HCT116 (cell line): ENCODE measurements at regions of chr17 and their contacts with region 1.

Region 1: GRCh38 chr17:4565209-4566141 is 5.1 kb upstream of the GGT6 start:
- DNase-seq: peak; percentile 84
- ATAC-seq: peak; percentile 84
- H3K4me3 ChIP-seq: no peak overlapping the region
- H3K27ac ChIP-seq: no peak overlapping the region
- H3K4me1 ChIP-seq: peaks cover 3 to 16% of the 10 kb centered on the region in 2 experiments; a peak in 3 of 4 replicates
- H3K27me3 ChIP-seq: no peaks in the 10 kb centered on the region
- CTCF ChIP-seq: peak; percentile 82 to 90 (median 86)
- POLR2A ChIP-seq: no peak
- RAD21 ChIP-seq: peak; percentile 59

Region 2: GRCh38 chr17:4433515-4434031 is 131.9 kb before region 1 on chr17 and contains the start of gene SPNS3:
- CTCF ChIA-PET with region 1: interaction called, 3 read pairs
- POLR2A ChIA-PET with region 1: no interaction called
- RAD21 ChIA-PET with region 1: interaction called in 1 of 2 experiments, 10 read pairs
- intact Hi-C with region 1: no loop called
- DNase-seq: no peak
- ATAC-seq: no peak
- H3K4me3 ChIP-seq: no peak within 1 kb of the TSS
- H3K27ac ChIP-seq: no peak within 1 kb of the TSS
- H3K4me1 ChIP-seq: no peaks in the 10 kb centered on the region
- H3K27me3 ChIP-seq: no peaks in the 10 kb centered on the region
- CTCF ChIP-seq: no peak
- POLR2A ChIP-seq: no peak
- RAD21 ChIP-seq: no peak
- total RNA-seq, gene SPNS3: 0.37 TPM

Region 3: GRCh38 chr17:4554997-4555799 is 10.3 kb before region 1 on chr17 and contains the start of gene MYBBP1A:
- CTCF ChIA-PET with region 1: interaction called, 16 read pairs
- POLR2A ChIA-PET with region 1: interaction called, 3 read pairs
- RAD21 ChIA-PET with region 1: no interaction called
- intact Hi-C with region 1: no loop called
- DNase-seq: peak; percentile 86
- ATAC-seq: peak; percentile 92
- H3K4me3 ChIP-seq: peak within 1 kb of the TSS; percentile 99 to 100
- H3K27ac ChIP-seq: peak within 1 kb of the TSS; percentile 71
- H3K4me1 ChIP-seq: peaks cover 6 to 23% of the 10 kb centered on the region in 2 experiments; a peak in 3 of 4 replicates
- H3K27me3 ChIP-seq: no peaks in the 10 kb centered on the region
- CTCF ChIP-seq: peak in 1 of 3 experiments; percentile 15; a peak in 1 of 6 replicates
- POLR2A ChIP-seq: peak; percentile 91
- RAD21 ChIP-seq: no peak
- total RNA-seq, gene MYBBP1A: 130 TPM

Region 4: GRCh38 chr17:4583782-4584100 is 18.3 kb after region 1 on chr17:
- CTCF ChIA-PET with region 1: interaction called, 19 read pairs
- POLR2A ChIA-PET with region 1: interaction called, 4 read pairs
- RAD21 ChIA-PET with region 1: no interaction called
- intact Hi-C with region 1: no loop called
- DNase-seq: peak; percentile 31
- ATAC-seq: peak; percentile 83
- H3K4me3 ChIP-seq: peak overlapping the region; percentile 51 to 65
- H3K27ac ChIP-seq: peak overlapping the region; percentile 46; the same call in 1 of the 2 replicates
- H3K4me1 ChIP-seq: peaks cover 5 to 23% of the 10 kb centered on the region in 2 experiments; a peak in 3 of 4 replicates
- H3K27me3 ChIP-seq: peaks cover 5% of the 10 kb centered on the region; the same call in 1 of the 2 replicates
- CTCF ChIP-seq: peak in 2 of 3 experiments; percentile 50 to 55; a peak in 4 of 6 replicates
- POLR2A ChIP-seq: no peak
- RAD21 ChIP-seq: no peak

Region 5: GRCh38 chr17:4625181-4625617 is 59.7 kb after region 1 on chr17:
- CTCF ChIA-PET with region 1: interaction called, 59 read pairs
- POLR2A ChIA-PET with region 1: interaction called, 8 read pairs
- RAD21 ChIA-PET with region 1: interaction called, 8 to 9 read pairs
- intact Hi-C with region 1: loop called (anchors 1 kb)
- DNase-seq: no peak
- ATAC-seq: no peak
- H3K4me3 ChIP-seq: no peak overlapping the region
- H3K27ac ChIP-seq: no peak overlapping the region
- H3K4me1 ChIP-seq: peaks cover 0 to 4% of the 10 kb centered on the region in 2 experiments; a peak in 1 of 4 replicates
- H3K27me3 ChIP-seq: no peaks in the 10 kb centered on the region
- CTCF ChIP-seq: no peak
- POLR2A ChIP-seq: no peak
- RAD21 ChIP-seq: no peak

Region 6: DNA sequence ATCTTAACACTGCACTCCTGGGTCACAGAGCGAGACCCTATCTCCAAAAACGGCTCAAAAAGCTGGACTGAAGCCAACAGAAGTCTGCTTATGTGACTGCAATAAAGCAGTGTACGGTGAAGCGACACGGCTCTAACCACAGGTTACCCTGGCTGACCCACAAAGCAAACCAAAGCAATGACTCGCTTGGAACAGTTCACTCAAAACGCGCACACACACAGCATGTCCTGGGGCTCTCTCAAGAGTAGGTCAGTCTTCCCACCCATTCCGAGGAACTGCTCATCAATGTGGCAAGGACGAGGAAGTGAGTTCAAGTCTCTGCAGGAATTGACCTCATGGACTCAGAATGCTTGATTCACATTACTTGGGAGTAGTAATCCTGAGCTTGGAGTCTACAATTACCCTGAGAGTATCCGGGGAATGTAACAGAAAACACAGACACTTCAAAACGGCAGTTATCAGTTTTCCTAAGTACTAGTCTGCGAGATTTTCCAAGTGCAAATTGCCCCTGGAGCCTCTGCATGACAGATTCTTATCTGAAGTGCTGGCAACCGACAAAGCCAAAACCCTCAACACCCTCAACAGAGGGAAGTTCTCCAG is 113.1 kb after region 1 on chr17:
- CTCF ChIA-PET with region 1: no interaction called
- POLR2A ChIA-PET with region 1: no interaction called
- RAD21 ChIA-PET with region 1: no interaction called
- intact Hi-C with region 1: no loop called
- DNase-seq: peak; percentile 61
- ATAC-seq: peak; percentile 79
- H3K4me3 ChIP-seq: no peak overlapping the region
- H3K27ac ChIP-seq: peak overlapping the region; percentile 29; the same call in 1 of the 2 replicates
- H3K4me1 ChIP-seq: peaks cover 24 to 36% of the 10 kb centered on the region in 2 experiments
- H3K27me3 ChIP-seq: no peaks in the 10 kb centered on the region
- CTCF ChIP-seq: no peak
- POLR2A ChIP-seq: no peak
- RAD21 ChIP-seq: no peak

Region 7: GRCh38 chr17:4891411-4892342 is 326.2 kb after region 1 on chr17:
- CTCF ChIA-PET with region 1: interaction called, 10 read pairs
- POLR2A ChIA-PET with region 1: no interaction called
- RAD21 ChIA-PET with region 1: no interaction called
- intact Hi-C with region 1: loop called (anchors 1 kb)
- DNase-seq: no peak
- ATAC-seq: no peak
- H3K4me3 ChIP-seq: no peak overlapping the region
- H3K27ac ChIP-seq: no peak overlapping the region
- H3K4me1 ChIP-seq: no peaks in the 10 kb centered on the region
- H3K27me3 ChIP-seq: no peaks in the 10 kb centered on the region
- CTCF ChIP-seq: no peak
- POLR2A ChIP-seq: no peak
- RAD21 ChIP-seq: no peak